ENCODE measurements at regions of chr2 and their contacts with region 1.

Region 1: GRCh38 chr2:165563468-165564225 is 94.1 kb downstream of the CSRNP3 start:
- DNase-seq: no peak
- ATAC-seq: no peak
- H3K4me3 Mint-ChIP-seq: no peak overlapping the region
- H3K27ac Mint-ChIP-seq: no peak overlapping the region
- H3K4me1 Mint-ChIP-seq: no peaks in the 10 kb centered on the region
- H3K27me3 Mint-ChIP-seq: peaks cover 4% of the 10 kb centered on the region
- CTCF ChIP-seq: no peak

Region 2: GRCh38 chr2:165227571-165227970 is 336.1 kb before region 1 on chr2:
- CTCF ChIA-PET with region 1: no interaction called
- POLR2A ChIA-PET with region 1: no interaction called
- intact Hi-C with region 1: no loop called
- DNase-seq: no peak
- ATAC-seq: no peak
- H3K4me3 Mint-ChIP-seq: no peak overlapping the region
- H3K27ac Mint-ChIP-seq: no peak overlapping the region
- H3K4me1 Mint-ChIP-seq: no peaks in the 10 kb centered on the region
- H3K27me3 Mint-ChIP-seq: peaks cover 6% of the 10 kb centered on the region
- CTCF ChIP-seq: no peak

Region 3: GRCh38 chr2:165293440-165294353 is 269.9 kb before region 1 on chr2:
- CTCF ChIA-PET with region 1: no interaction called
- POLR2A ChIA-PET with region 1: no interaction called
- intact Hi-C with region 1: no loop called
- DNase-seq: no peak
- ATAC-seq: peak; percentile 100
- H3K4me3 Mint-ChIP-seq: no peak overlapping the region
- H3K27ac Mint-ChIP-seq: no peak overlapping the region
- H3K4me1 Mint-ChIP-seq: peaks cover 4% of the 10 kb centered on the region
- H3K27me3 Mint-ChIP-seq: peaks cover 7% of the 10 kb centered on the region
- CTCF ChIP-seq: no peak

Region 4: GRCh38 chr2:165594935-165595255 is 31.2 kb after region 1 on chr2:
- CTCF ChIA-PET with region 1: no interaction called
- POLR2A ChIA-PET with region 1: interaction called, 20 read pairs
- intact Hi-C with region 1: no loop called
- DNase-seq: no peak
- ATAC-seq: peak; percentile 88
- H3K4me3 Mint-ChIP-seq: peak overlapping the region; percentile 59
- H3K27ac Mint-ChIP-seq: peak overlapping the region; percentile 42
- H3K4me1 Mint-ChIP-seq: peaks cover 18% of the 10 kb centered on the region
- H3K27me3 Mint-ChIP-seq: no peaks in the 10 kb centered on the region
- CTCF ChIP-seq: no peak

Region 5: GRCh38 chr2:165698444-165698894 is 134.8 kb after region 1 on chr2:
- CTCF ChIA-PET with region 1: interaction called, 3 read pairs
- POLR2A ChIA-PET with region 1: no interaction called
- intact Hi-C with region 1: loop called (anchors 1 kb)
- DNase-seq: no peak
- ATAC-seq: peak; percentile 71
- H3K4me3 Mint-ChIP-seq: no peak overlapping the region
- H3K27ac Mint-ChIP-seq: no peak overlapping the region
- H3K4me1 Mint-ChIP-seq: peaks cover 4% of the 10 kb centered on the region
- H3K27me3 Mint-ChIP-seq: no peaks in the 10 kb centered on the region
- CTCF ChIP-seq: no peak